Calu3 (cell line): ENCODE measurements at regions of chr2 and their contacts with region 1.

Region 1: DNA sequence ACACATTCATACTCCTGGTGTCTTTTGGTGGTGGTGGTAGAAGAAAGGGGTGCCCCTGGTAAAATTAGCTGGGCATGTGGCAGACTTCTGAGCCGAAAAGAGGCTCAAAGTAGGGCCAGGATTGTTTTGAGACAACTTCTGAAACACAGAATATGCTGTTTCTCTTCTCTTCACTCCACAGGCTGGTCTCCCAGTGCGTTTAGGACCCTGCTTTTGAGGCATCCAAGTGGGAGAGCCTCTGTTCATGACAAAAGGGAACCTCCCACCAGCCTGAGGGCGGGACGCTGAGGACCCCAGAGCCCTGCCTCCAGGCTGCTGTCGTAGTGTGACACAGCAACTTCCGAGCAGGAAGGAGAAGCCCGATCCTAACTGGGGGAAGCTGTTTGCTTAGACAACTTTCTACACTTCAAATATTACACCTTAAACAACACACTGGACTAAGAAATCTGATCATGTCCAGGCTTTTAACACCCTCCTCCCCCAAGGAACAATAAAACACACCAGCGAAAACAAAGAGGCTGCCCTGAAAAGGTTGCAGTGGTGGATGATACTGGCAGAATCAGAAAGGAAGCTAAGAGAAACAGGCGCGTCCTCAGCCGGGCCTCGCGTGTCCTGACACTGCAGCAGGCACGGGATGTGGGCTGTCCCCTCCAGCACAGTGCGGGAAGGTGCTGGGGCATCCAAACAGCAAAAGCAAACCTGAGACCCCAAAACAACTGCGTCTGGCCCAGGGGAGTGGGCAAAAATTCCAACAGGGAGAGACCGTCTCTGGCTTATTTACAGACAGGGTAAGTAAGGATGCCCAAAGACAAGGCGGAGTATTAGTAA is 9.3 kb downstream of the SERTAD2 start:
- DNase-seq: peak; percentile 77
- H3K4me3 Mint-ChIP-seq: peak overlapping the region; percentile 85
- H3K27ac Mint-ChIP-seq: peak overlapping the region; percentile 97
- H3K4me1 Mint-ChIP-seq: peaks cover 68% of the 10 kb centered on the region
- H3K27me3 Mint-ChIP-seq: no peaks in the 10 kb centered on the region
- CTCF ChIP-seq: no peak

Region 2: GRCh38 chr2:64348386-64349130 is 295.8 kb before region 1 on chr2:
- CTCF ChIA-PET with region 1: no interaction called
- intact Hi-C with region 1: no loop called
- DNase-seq: no peak
- H3K4me3 Mint-ChIP-seq: no peak overlapping the region
- H3K27ac Mint-ChIP-seq: no peak overlapping the region
- H3K4me1 Mint-ChIP-seq: no peaks in the 10 kb centered on the region
- H3K27me3 Mint-ChIP-seq: no peaks in the 10 kb centered on the region
- CTCF ChIP-seq: no peak

Region 3: GRCh38 chr2:64586883-64587481 is 57.4 kb before region 1 on chr2:
- CTCF ChIA-PET with region 1: interaction called, 6 read pairs
- intact Hi-C with region 1: loop called (anchors 5 kb)
- DNase-seq: no peak
- H3K4me3 Mint-ChIP-seq: no peak overlapping the region
- H3K27ac Mint-ChIP-seq: no peak overlapping the region
- H3K4me1 Mint-ChIP-seq: no peaks in the 10 kb centered on the region
- H3K27me3 Mint-ChIP-seq: no peaks in the 10 kb centered on the region
- CTCF ChIP-seq: peak; percentile 39

Region 4: DNA sequence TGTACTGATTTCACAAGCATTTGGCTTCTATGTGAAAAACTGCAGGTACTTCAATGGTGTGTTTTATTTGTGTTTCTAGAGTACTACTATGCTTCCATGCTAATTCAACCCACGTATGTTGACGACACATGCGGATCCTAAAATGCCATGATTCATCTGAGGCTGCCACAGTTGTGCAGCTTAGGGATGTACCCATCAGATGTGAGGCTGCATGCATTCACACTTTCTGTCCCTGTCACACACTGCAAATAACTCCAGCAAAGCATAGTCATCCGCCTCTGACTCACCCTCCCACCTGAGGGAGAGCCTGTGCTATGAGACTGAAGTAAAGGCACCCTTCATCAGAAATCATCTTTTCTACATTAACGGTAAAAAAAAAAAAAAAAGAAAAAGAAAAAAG is 31.5 kb after region 1 on chr2:
- CTCF ChIA-PET with region 1: no interaction called
- intact Hi-C with region 1: no loop called
- DNase-seq: no peak
- H3K4me3 Mint-ChIP-seq: no peak overlapping the region
- H3K27ac Mint-ChIP-seq: no peak overlapping the region
- H3K4me1 Mint-ChIP-seq: no peaks in the 10 kb centered on the region
- H3K27me3 Mint-ChIP-seq: no peaks in the 10 kb centered on the region
- CTCF ChIP-seq: no peak

Region 5: GRCh38 chr2:64767670-64768468 is 123.5 kb after region 1 on chr2:
- CTCF ChIA-PET with region 1: interaction called, 5 read pairs
- intact Hi-C with region 1: loop called (anchors 5 kb)
- DNase-seq: peak; percentile 86
- H3K4me3 Mint-ChIP-seq: peak overlapping the region; percentile 62
- H3K27ac Mint-ChIP-seq: peak overlapping the region; percentile 79
- H3K4me1 Mint-ChIP-seq: peaks cover 41% of the 10 kb centered on the region
- H3K27me3 Mint-ChIP-seq: no peaks in the 10 kb centered on the region
- CTCF ChIP-seq: no peak

Region 6: GRCh38 chr2:64831134-64831976 is 187.0 kb after region 1 on chr2:
- CTCF ChIA-PET with region 1: interaction called, 15 read pairs
- intact Hi-C with region 1: loop called (anchors 10 kb)
- DNase-seq: peak; percentile 99
- H3K4me3 Mint-ChIP-seq: peak overlapping the region; percentile 48
- H3K27ac Mint-ChIP-seq: peak overlapping the region; percentile 97
- H3K4me1 Mint-ChIP-seq: peaks cover 52% of the 10 kb centered on the region
- H3K27me3 Mint-ChIP-seq: no peaks in the 10 kb centered on the region
- CTCF ChIP-seq: peak; percentile 90

Region 7: DNA sequence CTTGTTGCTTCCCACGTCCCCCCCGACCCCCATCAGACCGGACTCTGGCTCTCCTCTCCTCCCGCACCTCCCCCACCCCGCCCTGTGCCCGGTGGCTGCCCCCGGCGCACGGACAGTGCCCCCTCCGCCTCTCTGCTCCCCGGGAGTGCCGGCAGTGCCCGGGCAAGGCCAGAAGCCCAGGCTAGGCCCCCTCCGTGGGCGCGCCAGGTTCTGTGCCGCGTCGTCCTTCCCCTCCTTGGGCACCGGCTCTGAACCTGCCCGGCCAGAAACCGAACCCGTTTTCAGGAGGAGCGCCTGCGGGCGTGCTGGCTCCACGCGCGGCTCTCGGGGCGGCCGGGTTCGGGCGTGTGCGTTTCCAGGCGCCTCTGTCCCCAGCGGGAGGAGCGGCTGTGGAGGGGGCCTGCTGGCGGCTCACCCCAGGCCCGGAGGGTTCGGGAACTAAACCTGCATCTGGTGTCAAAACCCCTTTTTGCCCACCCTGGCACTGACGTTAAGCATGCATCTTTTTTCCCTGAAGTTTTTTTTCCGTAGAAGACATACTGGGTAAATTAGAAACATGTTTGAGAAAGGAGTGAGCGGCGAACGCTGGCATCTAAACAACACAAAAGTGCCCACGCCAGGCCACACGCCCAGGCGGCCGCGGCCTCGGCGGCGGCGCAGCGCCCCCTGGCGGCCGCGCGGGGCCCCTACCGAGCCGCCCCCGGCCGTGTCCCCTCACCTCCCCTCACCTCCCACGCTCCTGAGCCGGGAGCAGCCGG is 220.9 kb after region 1 on chr2:
- CTCF ChIA-PET with region 1: interaction called, 5 read pairs
- intact Hi-C with region 1: loop called (anchors 1 kb)
- DNase-seq: peak; percentile 63
- H3K4me3 Mint-ChIP-seq: peak overlapping the region; percentile 49
- H3K27ac Mint-ChIP-seq: no peak overlapping the region
- H3K4me1 Mint-ChIP-seq: peaks cover 10% of the 10 kb centered on the region
- H3K27me3 Mint-ChIP-seq: no peaks in the 10 kb centered on the region
- CTCF ChIP-seq: peak; percentile 87

Region 8: GRCh38 chr2:65159906-65160305 is 515.5 kb after region 1 on chr2:
- CTCF ChIA-PET with region 1: no interaction called
- intact Hi-C with region 1: no loop called
- DNase-seq: no peak
- H3K4me3 Mint-ChIP-seq: no peak overlapping the region
- H3K27ac Mint-ChIP-seq: no peak overlapping the region
- H3K4me1 Mint-ChIP-seq: peaks cover 23% of the 10 kb centered on the region
- H3K27me3 Mint-ChIP-seq: no peaks in the 10 kb centered on the region
- CTCF ChIP-seq: no peak